Ascending aorta (tissue), 2 donors: ENCODE measurements at regions of chr16 and their contacts with region 1.

Region 1: DNA sequence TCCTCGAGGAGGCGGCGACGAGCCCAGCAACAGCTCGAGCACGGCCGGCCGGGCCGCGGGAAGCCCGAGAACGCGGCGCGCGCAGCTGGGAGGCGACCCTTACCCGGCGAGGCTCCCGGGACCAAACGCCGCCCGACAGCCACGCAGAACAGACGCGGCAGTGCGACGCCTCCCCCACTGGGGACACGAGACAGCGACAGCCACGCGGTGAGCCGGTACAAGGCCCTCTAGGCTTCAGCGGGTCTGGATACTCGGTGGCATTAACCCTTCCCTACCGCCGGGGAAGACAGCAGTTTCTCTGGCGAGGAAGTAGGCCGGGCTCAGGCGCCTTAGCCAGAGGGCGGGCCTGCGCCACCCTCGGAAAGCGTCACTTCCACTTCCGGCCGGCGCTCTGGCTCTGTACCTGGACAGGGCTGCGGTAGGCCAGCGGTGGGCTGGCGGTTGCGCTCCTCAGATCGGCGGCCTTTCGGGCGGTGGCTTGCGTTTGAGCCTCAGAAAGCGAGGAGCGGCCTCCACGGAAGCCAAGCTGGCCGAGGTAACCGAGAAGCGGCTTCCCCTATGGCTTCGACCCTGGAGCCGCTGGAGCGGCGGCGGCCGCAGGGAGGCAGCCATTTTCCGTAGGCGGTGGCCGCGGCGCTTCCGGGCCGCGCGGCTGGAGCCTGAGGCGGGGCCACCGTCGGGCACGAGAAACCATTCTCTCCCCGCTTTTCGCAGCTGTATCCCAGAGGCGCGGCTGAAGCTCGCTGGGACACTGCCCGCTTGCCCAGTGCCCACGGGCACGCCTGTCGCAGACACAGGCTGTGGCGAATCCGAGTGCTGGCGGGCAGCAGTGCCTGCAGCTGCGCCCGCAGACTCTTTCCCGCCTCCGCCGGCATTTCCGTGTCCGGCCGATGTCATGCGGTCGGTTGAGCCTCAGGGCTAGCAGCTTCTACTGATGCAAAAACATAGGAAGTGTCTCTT is at the starts of genes TIGD7 and ZNF75A:
- DNase-seq: peak in 1 of 2 donors; percentile 92
- H3K4me3 ChIP-seq: peak within 1 kb of the TSS; percentile 67 to 88
- H3K27ac ChIP-seq: peak within 1 kb of the TSS; percentile 93
- H3K4me1 ChIP-seq: peaks cover 0 to 7% of the 10 kb centered on the region in 2 donors
- H3K27me3 ChIP-seq: no peaks in the 10 kb centered on the region
- CTCF ChIP-seq: peak in 2 of 3 experiments; percentile 22 to 39
- total RNA-seq, gene TIGD7: 1.6 TPM
- total RNA-seq, gene ZNF75A: 8.3 TPM

Region 2: GRCh38 chr16:3234543-3235541 is 70.5 kb before region 1 on chr16 and contains the start of gene ZNF200:
- intact Hi-C with region 1: loop called (anchors 2 kb)
- DNase-seq: peak; percentile 79 to 97
- H3K4me3 ChIP-seq: peak within 1 kb of the TSS; percentile 84 to 97
- H3K27ac ChIP-seq: peak within 1 kb of the TSS; percentile 94 to 97
- H3K4me1 ChIP-seq: peaks cover 0 to 8% of the 10 kb centered on the region in 2 donors
- H3K27me3 ChIP-seq: no peaks in the 10 kb centered on the region
- CTCF ChIP-seq: no peak
- total RNA-seq, gene ZNF200: 14.6 TPM

Region 3: DNA sequence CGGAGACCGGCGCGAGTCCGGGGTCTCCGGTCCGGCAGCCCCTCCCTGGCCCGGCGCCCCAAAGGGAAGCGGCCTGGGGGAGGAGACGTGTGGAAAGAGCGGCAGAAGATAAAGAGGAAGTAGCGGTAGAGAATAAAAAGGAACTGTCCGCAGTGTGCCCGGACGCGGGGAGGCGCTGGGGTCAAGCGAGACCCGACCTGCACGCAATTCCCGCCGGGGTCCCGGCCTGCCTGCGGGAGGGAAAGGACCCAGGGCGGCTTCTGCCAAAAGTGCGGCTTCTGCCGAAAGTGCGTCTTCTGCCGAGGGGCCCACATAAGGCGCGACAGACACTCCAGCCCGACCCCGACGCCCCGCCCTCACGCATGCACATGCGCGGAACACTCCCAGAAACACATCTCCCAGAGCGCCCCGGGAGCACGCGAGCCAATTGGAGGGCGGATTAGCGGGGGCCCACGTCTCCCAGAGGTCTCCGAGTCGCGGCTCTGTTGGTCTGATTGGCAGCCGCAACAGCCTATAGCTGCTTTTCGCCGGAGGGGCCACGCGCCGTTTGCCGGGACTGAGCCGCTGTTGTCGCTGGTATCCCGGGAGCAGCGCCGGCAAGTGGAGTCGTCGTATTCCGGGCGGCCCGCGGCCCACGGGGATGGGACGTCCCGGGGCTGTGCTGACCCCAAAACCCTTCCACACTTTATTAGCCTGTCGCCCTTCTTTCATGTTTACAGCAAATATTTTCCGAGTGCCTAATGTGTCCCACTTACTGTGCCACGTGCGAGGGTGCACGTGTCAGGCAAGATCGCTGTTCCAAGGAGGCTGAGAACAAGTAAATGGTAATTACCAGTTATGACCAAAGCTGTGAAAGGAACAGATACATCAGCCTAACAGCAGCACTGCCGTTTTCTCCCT is 41.0 kb before region 1 on chr16:
- intact Hi-C with region 1: loop called (anchors 1 kb)
- DNase-seq: peak; percentile 90 to 98
- H3K4me3 ChIP-seq: peak overlapping the region; percentile 56 to 66
- H3K27ac ChIP-seq: peak overlapping the region; percentile 89 to 94
- H3K4me1 ChIP-seq: peaks cover 0 to 10% of the 10 kb centered on the region in 2 donors
- H3K27me3 ChIP-seq: no peaks in the 10 kb centered on the region
- CTCF ChIP-seq: peak in 1 of 3 experiments; percentile 33

Region 4: DNA sequence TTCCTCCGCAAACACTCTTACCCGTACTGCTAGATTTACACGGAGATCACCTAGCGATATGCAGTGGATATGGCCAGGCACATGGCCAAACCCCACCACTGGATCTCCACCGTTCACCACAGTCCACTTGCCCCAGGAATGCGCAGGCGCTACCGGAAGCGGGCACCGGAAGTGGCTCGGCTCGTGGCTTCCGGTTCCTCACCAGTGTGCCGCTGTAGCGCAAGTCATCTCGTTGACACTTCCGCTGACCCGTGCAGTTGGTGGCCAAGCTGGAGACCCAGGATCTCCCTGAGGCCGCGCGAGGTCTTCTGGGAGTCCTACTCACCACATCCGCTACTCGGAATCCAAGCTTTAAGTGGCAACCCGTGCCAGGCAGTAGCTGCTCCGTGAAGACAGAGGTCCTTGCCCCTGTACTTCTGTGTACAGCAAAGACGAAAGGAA is 126.4 kb after region 1 on chr16:
- intact Hi-C with region 1: no loop called
- DNase-seq: peak in 1 of 2 donors; percentile 71
- H3K4me3 ChIP-seq: peak overlapping the region in 1 of 2 donors; percentile 42
- H3K27ac ChIP-seq: no peak overlapping the region
- H3K4me1 ChIP-seq: no peaks in the 10 kb centered on the region
- H3K27me3 ChIP-seq: no peaks in the 10 kb centered on the region
- CTCF ChIP-seq: no peak

Region 5: DNA sequence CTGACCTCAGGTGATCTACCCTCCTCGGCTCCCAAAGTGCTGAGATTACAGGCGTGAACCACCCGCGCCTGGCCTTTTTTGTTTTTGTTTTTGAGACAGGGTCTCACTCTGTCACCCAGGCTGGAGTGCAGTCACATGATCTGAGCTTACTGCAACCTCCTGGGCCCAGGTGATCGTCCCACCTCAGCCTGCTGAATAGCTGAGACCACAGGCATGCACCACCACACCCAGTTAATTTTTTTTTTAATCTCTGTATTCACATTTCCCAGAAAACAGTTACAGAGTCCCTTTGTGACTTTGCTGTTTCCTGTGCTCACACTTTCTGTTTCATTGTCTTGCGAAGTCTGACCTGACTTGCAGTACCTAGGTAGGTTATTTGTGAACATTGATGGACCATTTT is 198.1 kb after region 1 on chr16:
- intact Hi-C with region 1: loop called (anchors 5 kb)
- DNase-seq: no peak
- H3K4me3 ChIP-seq: no peak overlapping the region
- H3K27ac ChIP-seq: no peak overlapping the region
- H3K4me1 ChIP-seq: peaks cover 4% of the 10 kb centered on the region in 2 donors
- H3K27me3 ChIP-seq: no peaks in the 10 kb centered on the region
- CTCF ChIP-seq: no peak